ENCODE measurements at regions of chr19 and their contacts with region 1.

Region 1: DNA sequence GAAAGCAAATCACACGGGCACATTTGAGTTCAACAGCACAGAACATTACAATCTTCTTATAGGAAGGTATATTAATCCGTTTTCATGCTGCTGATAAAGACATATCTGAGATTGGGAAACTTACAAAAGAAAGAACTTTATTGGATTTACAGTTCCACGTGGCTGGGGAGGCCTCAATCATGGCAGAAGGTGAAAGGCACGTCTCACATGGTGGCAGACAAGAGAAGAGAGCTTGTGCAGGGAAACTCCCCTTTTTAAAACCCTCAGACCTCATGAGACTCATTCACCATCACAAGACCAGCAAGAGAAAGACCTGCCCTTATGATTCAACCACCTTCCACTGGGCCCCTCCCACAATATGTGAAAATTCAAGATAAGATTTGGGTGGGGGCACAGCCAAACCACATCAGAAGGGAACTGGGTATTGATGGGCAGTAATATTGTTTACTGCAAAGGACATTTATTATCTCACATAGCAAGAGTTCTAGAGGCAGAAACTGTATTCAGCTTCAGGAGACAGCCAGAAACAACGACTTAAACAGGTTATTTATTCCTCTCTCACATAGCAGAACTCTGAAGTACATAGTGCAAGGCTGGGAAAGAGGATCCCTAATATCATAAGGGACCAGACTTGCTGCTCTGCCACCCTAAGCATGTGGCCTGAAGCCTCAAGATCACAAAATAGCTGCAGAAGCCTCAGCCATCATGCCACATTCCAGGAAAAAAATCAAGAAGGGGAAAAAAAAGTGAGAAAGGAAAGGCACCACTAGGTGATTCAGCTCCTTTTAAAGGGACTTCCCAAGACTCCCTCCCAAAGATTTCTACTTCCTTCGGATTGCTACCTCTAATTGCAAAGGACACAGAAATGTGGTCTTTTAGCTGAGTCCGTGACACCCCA is 23.1 kb downstream of the FXYD5 start:
- DNase-seq: peak; percentile 5
- H3K4me3 Mint-ChIP-seq: no peak overlapping the region
- H3K27ac Mint-ChIP-seq: no peak overlapping the region
- H3K4me1 Mint-ChIP-seq: peaks cover 44% of the 10 kb centered on the region
- H3K27me3 Mint-ChIP-seq: no peaks in the 10 kb centered on the region

Region 2: GRCh38 chr19:35204799-35205732 is 27.4 kb after region 1 on chr19:
- CTCF ChIA-PET with region 1: interaction called, 10 read pairs
- POLR2A ChIA-PET with region 1: no interaction called
- DNase-seq: peak; percentile 27
- H3K4me3 Mint-ChIP-seq: no peak overlapping the region
- H3K27ac Mint-ChIP-seq: peak overlapping the region; percentile 96
- H3K4me1 Mint-ChIP-seq: peaks cover 83% of the 10 kb centered on the region
- H3K27me3 Mint-ChIP-seq: no peaks in the 10 kb centered on the region